ENCODE measurements at regions of chr12 and their contacts with region 1.

Region 1: GRCh38 chr12:64551698-64552097 is 58.6 kb upstream of the RASSF3 start:
- DNase-seq: no peak
- H3K4me3 ChIP-seq: no peak overlapping the region
- H3K27ac ChIP-seq: no peak overlapping the region
- H3K27me3 ChIP-seq: no peaks in the 10 kb centered on the region
- CTCF ChIP-seq: no peak

Region 2: GRCh38 chr12:64403707-64404469 is 147.8 kb before region 1 on chr12 and contains the start of gene XPOT:
- CTCF ChIA-PET with region 1: no interaction called
- POLR2A ChIA-PET with region 1: no interaction called
- DNase-seq: peak; percentile 95
- H3K4me3 ChIP-seq: peak within 1 kb of the TSS; percentile 97
- H3K27ac ChIP-seq: peak within 1 kb of the TSS; percentile 100
- H3K27me3 ChIP-seq: no peaks in the 10 kb centered on the region
- CTCF ChIP-seq: no peak
- polyA plus RNA-seq, gene XPOT: 127 and 183 TPM in 2 replicates

Region 3: GRCh38 chr12:64486657-64487056 is 65.0 kb before region 1 on chr12:
- CTCF ChIA-PET with region 1: no interaction called
- POLR2A ChIA-PET with region 1: no interaction called
- DNase-seq: no peak
- H3K4me3 ChIP-seq: no peak overlapping the region
- H3K27ac ChIP-seq: no peak overlapping the region
- H3K27me3 ChIP-seq: no peaks in the 10 kb centered on the region
- CTCF ChIP-seq: no peak

Region 4: DNA sequence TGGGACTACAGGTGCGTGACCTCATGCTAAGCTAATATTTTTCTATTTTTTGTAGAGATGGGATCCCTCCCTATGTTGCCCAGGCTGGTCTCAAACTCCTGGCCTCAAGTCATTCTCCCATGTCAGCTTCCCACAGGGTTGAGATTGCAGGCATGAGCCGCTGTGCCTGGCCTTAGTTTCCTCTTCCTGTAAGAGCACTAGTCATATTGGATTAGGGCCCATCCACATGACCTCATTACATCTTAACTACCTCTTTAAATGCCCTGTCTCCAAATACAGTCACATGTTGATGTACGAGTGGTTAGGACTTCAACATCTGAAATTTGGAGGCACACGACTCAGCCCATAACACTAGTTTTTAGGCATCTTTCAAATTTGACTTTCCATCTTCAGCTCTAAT is 13.6 kb before region 1 on chr12:
- CTCF ChIA-PET with region 1: interaction called, 35 read pairs
- POLR2A ChIA-PET with region 1: no interaction called
- DNase-seq: no peak
- H3K4me3 ChIP-seq: no peak overlapping the region
- H3K27ac ChIP-seq: no peak overlapping the region
- H3K27me3 ChIP-seq: no peaks in the 10 kb centered on the region
- CTCF ChIP-seq: no peak

Region 5: DNA sequence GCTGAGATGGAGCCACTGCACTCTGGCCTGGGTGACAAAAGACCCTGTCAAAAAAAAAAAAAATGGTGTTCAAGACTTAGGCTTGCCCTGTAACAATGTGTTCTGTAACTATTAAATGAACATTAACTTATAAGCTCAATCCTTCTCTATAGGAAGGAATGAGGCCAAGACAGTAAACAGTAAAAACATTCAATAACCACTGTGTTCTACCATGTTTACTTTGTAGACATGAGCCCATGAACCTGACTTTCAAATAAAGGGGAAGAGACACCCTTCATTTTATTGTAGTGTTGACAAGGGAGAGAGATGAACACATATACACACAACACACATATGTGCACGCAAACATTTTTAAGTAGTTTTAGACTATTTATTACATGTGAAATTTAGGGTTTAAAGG is 38.5 kb after region 1 on chr12:
- CTCF ChIA-PET with region 1: interaction called, 10 read pairs
- POLR2A ChIA-PET with region 1: no interaction called
- DNase-seq: no peak
- H3K4me3 ChIP-seq: no peak overlapping the region
- H3K27ac ChIP-seq: no peak overlapping the region
- H3K27me3 ChIP-seq: no peaks in the 10 kb centered on the region
- CTCF ChIP-seq: no peak

Region 6: GRCh38 chr12:64618953-64619590 is 67.4 kb after region 1 on chr12:
- CTCF ChIA-PET with region 1: interaction called, 11 read pairs
- POLR2A ChIA-PET with region 1: no interaction called
- DNase-seq: no peak
- H3K4me3 ChIP-seq: no peak overlapping the region
- H3K27ac ChIP-seq: no peak overlapping the region
- H3K27me3 ChIP-seq: no peaks in the 10 kb centered on the region
- CTCF ChIP-seq: no peak

Region 7: GRCh38 chr12:64696080-64696741 is 144.5 kb after region 1 on chr12:
- CTCF ChIA-PET with region 1: interaction called, 230 read pairs
- POLR2A ChIA-PET with region 1: interaction called, 7 read pairs
- DNase-seq: no peak
- H3K4me3 ChIP-seq: no peak overlapping the region
- H3K27ac ChIP-seq: no peak overlapping the region
- H3K27me3 ChIP-seq: no peaks in the 10 kb centered on the region
- CTCF ChIP-seq: peak; percentile 34; the same call in 1 of the 2 replicates